Activated CD4-positive, alpha-beta T cell treated with anti-CD3 and anti-CD28 coated beads, Interleukin-2, amount 10 ng/mL, durations not matched to agents 24 days and 14 days (primary cell): ENCODE measurements at regions of chr6 and their contacts with region 1.

Region 1: DNA sequence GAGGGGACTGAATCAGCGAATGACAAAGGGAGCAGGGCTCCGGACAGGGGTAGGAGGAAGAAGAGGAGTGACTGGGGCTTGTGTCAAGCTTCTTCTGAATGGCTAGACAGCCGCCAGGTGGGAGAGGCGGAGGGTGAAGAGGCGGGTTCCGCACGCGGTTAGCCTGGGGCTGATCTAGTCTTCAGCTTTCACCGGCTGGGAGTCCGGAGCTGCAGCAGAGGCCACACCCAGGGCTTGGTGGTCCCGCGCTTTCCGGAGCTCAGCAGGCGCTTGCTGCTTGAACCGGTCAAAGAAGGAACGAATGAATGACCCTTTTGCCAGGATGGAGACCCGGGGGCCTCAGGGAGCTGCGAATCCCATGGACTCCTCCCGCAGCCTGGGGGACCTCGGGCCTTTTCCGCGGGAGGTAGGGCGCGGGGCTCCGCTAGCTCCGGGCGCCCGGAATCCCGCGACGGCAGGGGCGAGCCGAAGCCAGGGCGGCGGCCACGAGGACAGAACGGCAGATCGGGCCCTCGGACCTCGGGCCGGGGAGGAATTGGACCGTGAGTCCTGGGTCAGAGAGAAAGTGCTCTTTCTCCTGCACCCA is at the start of gene C6orf141:
- DNase-seq: peak; percentile 80
- H3K4me3 Mint-ChIP-seq: peak within 1 kb of the TSS; percentile 83
- H3K27ac Mint-ChIP-seq: peak within 1 kb of the TSS; percentile 42
- H3K4me1 Mint-ChIP-seq: peaks cover 18% of the 10 kb centered on the region
- H3K27me3 Mint-ChIP-seq: peaks cover 39% of the 10 kb centered on the region
- total RNA-seq, gene C6orf141: 0.14 TPM in 1 of 2 replicates, not detected in the other

Region 2: DNA sequence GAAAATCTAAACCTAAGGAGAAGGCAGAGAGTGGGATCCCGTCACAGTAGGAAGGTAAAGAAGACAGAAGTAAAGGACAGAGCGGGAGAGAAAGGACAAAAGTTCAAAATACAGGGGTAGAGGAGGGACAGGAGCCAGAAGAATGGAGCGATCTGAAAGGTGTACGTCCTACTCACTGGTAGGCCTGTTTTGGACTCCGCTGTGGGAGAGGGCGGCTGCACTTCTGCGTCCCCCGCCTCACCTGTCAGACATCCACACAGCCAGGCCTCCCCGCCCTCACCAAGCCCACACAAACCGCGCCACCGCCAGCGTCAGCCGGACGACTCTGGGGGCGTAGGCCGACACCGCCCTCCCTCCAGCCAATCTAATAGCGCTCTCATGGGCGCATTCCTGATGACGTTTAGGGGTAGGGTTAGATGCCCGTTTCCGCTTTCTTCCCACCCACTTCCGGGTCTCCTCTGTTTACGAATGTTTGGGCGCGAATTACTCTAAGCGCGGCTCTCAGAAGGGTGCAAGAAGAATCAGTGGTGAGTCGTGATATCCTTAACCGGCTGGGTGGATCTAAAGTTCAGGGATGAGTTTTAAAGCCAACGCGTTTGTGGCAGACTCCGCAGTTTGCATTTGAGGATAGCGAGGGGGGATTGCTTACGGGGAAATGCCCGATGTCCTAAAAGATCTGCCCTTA is 87.5 kb before region 1 on chr6 and contains the starts of genes CENPQ and MMUT:
- intact Hi-C with region 1: loop called (anchors 2 kb)
- DNase-seq: peak; percentile 98
- H3K4me3 Mint-ChIP-seq: peak within 1 kb of the TSS; percentile 96
- H3K27ac Mint-ChIP-seq: peak within 1 kb of the TSS; percentile 92
- H3K4me1 Mint-ChIP-seq: peaks cover 47% of the 10 kb centered on the region
- H3K27me3 Mint-ChIP-seq: no peaks in the 10 kb centered on the region
- total RNA-seq, gene CENPQ: 16.4 and 18.6 TPM in 2 replicates
- total RNA-seq, gene MMUT: 12.4 and 13.1 TPM in 2 replicates